MCF 10A (cell line): ENCODE measurements at regions of chr1 and their contacts with region 1.

Region 1: GRCh38 chr1:18681423-18681835 is 50.8 kb downstream of the PAX7 start:
- DNase-seq: peak; percentile 83
- H3K4me3 Mint-ChIP-seq: no peak overlapping the region
- H3K27ac Mint-ChIP-seq: peak overlapping the region; percentile 7
- H3K4me1 Mint-ChIP-seq: peaks cover 6% of the 10 kb centered on the region
- H3K27me3 Mint-ChIP-seq: no peaks in the 10 kb centered on the region
- CTCF ChIP-seq: peak; percentile 79

Region 2: GRCh38 chr1:18556364-18556763 is 125.1 kb before region 1 on chr1:
- CTCF ChIA-PET with region 1: no interaction called
- POLR2A ChIA-PET with region 1: no interaction called
- intact Hi-C with region 1: no loop called
- DNase-seq: peak; percentile 49
- H3K4me3 Mint-ChIP-seq: no peak overlapping the region
- H3K27ac Mint-ChIP-seq: no peak overlapping the region
- H3K4me1 Mint-ChIP-seq: no peaks in the 10 kb centered on the region
- H3K27me3 Mint-ChIP-seq: peaks cover 89% of the 10 kb centered on the region
- CTCF ChIP-seq: peak; percentile 20

Region 3: GRCh38 chr1:18592367-18592766 is 89.1 kb before region 1 on chr1:
- CTCF ChIA-PET with region 1: interaction called, 122 read pairs
- POLR2A ChIA-PET with region 1: interaction called, 5 read pairs
- intact Hi-C with region 1: loop called (anchors 1 kb)
- DNase-seq: no peak
- H3K4me3 Mint-ChIP-seq: no peak overlapping the region
- H3K27ac Mint-ChIP-seq: no peak overlapping the region
- H3K4me1 Mint-ChIP-seq: no peaks in the 10 kb centered on the region
- H3K27me3 Mint-ChIP-seq: peaks cover 37% of the 10 kb centered on the region
- CTCF ChIP-seq: no peak

Region 4: DNA sequence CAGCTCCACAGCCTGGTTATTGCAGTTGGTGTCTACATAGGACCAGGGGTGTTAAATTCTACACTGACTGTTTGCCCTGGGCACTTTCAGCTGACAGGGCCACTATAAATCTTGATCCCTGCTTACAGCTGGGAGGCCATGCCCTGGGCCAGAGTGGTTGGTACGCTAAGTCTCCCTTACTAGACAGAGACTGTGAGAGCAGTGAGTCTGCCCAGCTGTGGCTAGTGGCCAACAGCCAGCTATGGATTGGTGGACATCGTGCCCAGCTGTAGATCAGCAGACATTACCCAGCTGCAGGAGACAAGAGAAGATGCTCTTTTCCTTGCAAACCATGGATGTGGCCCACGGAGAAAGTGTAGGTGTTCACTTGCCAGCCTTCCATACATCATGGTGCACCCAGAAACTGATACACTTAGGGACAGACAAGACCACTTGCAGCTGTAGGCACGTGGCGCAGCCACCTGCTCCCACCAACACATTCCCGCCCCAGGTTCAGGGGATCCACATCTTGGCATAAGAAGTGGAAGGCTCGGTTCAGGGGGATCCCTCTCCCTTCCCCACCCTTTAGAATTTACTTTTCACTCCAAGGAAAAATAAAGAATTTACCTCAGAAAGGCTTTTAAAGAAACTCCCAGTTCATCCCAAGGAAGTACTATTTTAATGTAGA is 67.2 kb before region 1 on chr1:
- CTCF ChIA-PET with region 1: interaction called, 17 read pairs
- POLR2A ChIA-PET with region 1: interaction called, 3 read pairs
- intact Hi-C with region 1: no loop called
- DNase-seq: no peak
- H3K4me3 Mint-ChIP-seq: no peak overlapping the region
- H3K27ac Mint-ChIP-seq: no peak overlapping the region
- H3K4me1 Mint-ChIP-seq: peaks cover 10% of the 10 kb centered on the region
- H3K27me3 Mint-ChIP-seq: no peaks in the 10 kb centered on the region
- CTCF ChIP-seq: no peak

Region 5: GRCh38 chr1:18691648-18692047 is 10.2 kb after region 1 on chr1:
- CTCF ChIA-PET with region 1: interaction called, 15 read pairs
- POLR2A ChIA-PET with region 1: no interaction called
- intact Hi-C with region 1: no loop called
- DNase-seq: no peak
- H3K4me3 Mint-ChIP-seq: no peak overlapping the region
- H3K27ac Mint-ChIP-seq: no peak overlapping the region
- H3K4me1 Mint-ChIP-seq: no peaks in the 10 kb centered on the region
- H3K27me3 Mint-ChIP-seq: peaks cover 24% of the 10 kb centered on the region
- CTCF ChIP-seq: no peak

Region 6: GRCh38 chr1:18875107-18875795 is 193.8 kb after region 1 on chr1:
- CTCF ChIA-PET with region 1: interaction called, 5 read pairs
- POLR2A ChIA-PET with region 1: no interaction called
- intact Hi-C with region 1: loop called (anchors 5 kb)
- DNase-seq: peak; percentile 76
- H3K4me3 Mint-ChIP-seq: no peak overlapping the region
- H3K27ac Mint-ChIP-seq: no peak overlapping the region
- H3K4me1 Mint-ChIP-seq: no peaks in the 10 kb centered on the region
- H3K27me3 Mint-ChIP-seq: no peaks in the 10 kb centered on the region
- CTCF ChIP-seq: peak; percentile 81

Region 7: GRCh38 chr1:19750101-19750881 is 1068.9 kb after region 1 on chr1:
- CTCF ChIA-PET with region 1: no interaction called
- POLR2A ChIA-PET with region 1: no interaction called
- intact Hi-C with region 1: no loop called
- DNase-seq: peak; percentile 47
- H3K4me3 Mint-ChIP-seq: no peak overlapping the region
- H3K27ac Mint-ChIP-seq: no peak overlapping the region
- H3K4me1 Mint-ChIP-seq: peaks cover 5% of the 10 kb centered on the region
- H3K27me3 Mint-ChIP-seq: no peaks in the 10 kb centered on the region
- CTCF ChIP-seq: no peak